ENCODE measurements at regions of chr7 and their contacts with region 1.

Region 1: DNA sequence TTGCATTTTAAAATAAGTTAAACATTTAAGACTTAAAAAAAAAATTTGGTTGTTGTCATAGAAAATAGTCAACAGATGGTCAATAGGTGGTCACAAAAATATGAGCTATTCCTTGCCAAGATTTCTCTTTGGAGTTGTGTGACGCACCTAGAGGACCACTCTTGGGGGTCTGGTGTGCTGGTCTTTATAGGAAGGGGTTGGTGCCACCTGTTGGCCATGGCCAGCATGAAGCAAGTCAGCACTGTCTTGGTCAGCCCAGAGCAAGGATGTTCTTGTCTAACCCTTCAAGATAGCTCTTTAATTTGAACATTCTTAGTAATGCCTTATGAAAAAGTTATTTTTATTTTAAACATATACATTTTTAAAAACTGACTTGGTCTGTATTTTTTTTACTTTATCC is 267.9 kb upstream of the CNTNAP2 start:
- DNase-seq: peak in 1 of 2 experiments; percentile 61
- H3K4me3 ChIP-seq: no peak overlapping the region
- H3K27ac ChIP-seq: no peak overlapping the region
- H3K4me1 ChIP-seq: no peaks in the 10 kb centered on the region
- H3K27me3 ChIP-seq: no peaks in the 10 kb centered on the region
- CTCF ChIP-seq: peak; percentile 73 to 86 (median 84)
- EP300 ChIP-seq: no peak
- POLR2A ChIP-seq: no peak
- RAD21 ChIP-seq: peak; percentile 86 to 90

Region 2: DNA sequence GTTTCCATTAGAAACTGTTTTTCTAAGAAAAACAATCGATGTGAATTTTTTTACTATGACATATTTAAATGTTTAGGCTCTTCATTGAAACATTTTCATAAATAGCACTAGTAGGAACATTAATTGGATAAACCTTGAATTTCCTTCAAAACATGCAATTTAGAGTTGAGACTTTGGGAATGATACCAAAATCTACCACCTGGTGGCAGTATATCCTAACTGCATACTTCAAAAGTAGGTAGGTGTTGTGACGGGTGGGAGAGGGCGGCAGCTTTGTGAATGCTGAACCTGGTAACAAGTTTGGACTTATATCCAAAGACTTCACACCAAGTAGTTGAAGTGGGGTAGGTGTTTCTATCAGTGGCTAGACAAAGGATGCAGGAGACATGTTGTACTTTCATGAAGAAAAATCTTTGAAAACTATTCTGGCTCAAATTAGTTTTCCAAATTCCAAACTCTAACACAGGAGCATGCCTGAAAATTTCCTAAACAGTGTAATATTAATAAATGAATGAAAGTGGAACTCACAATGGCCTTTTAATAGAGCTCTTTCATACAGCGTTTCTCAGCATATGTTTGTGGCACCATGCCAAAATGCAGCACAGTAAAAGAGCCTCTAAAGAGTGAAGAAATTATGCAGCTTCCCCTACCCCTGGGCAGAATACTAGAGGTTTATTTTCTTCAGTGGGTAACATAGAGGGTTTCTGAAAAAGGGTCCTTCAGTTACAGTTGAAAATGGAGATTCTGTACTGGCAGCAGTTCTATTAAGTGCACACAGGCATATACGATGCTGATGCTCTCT is 811.9 kb before region 1 on chr7:
- CTCF ChIA-PET with region 1: interaction called, 12 read pairs
- POLR2A ChIA-PET with region 1: no interaction called
- DNase-seq: peak in 1 of 2 experiments; percentile 21
- H3K4me3 ChIP-seq: no peak overlapping the region
- H3K27ac ChIP-seq: no peak overlapping the region
- H3K4me1 ChIP-seq: no peaks in the 10 kb centered on the region
- H3K27me3 ChIP-seq: no peaks in the 10 kb centered on the region
- CTCF ChIP-seq: peak in 2 of 3 experiments; percentile 64 to 77; a peak in 3 of 4 replicates
- EP300 ChIP-seq: no peak
- POLR2A ChIP-seq: no peak
- RAD21 ChIP-seq: peak; percentile 92 to 93

Region 3: GRCh38 chr7:145831616-145832206 is 17.0 kb before region 1 on chr7:
- CTCF ChIA-PET with region 1: interaction called, 11 read pairs
- POLR2A ChIA-PET with region 1: no interaction called
- DNase-seq: no peak
- H3K4me3 ChIP-seq: no peak overlapping the region
- H3K27ac ChIP-seq: no peak overlapping the region
- H3K4me1 ChIP-seq: no peaks in the 10 kb centered on the region
- H3K27me3 ChIP-seq: no peaks in the 10 kb centered on the region
- CTCF ChIP-seq: no peak
- EP300 ChIP-seq: no peak
- POLR2A ChIP-seq: no peak
- RAD21 ChIP-seq: no peak

Region 4: GRCh38 chr7:145860809-145861208 is 12.1 kb after region 1 on chr7:
- CTCF ChIA-PET with region 1: interaction called, 11 read pairs
- POLR2A ChIA-PET with region 1: no interaction called
- DNase-seq: no peak
- H3K4me3 ChIP-seq: no peak overlapping the region
- H3K27ac ChIP-seq: no peak overlapping the region
- H3K4me1 ChIP-seq: no peaks in the 10 kb centered on the region; a peak in 2 of 7 replicates
- H3K27me3 ChIP-seq: no peaks in the 10 kb centered on the region
- CTCF ChIP-seq: no peak
- EP300 ChIP-seq: no peak
- POLR2A ChIP-seq: no peak
- RAD21 ChIP-seq: no peak

Region 5: GRCh38 chr7:145868935-145869334 is 20.2 kb after region 1 on chr7:
- CTCF ChIA-PET with region 1: interaction called, 10 read pairs
- POLR2A ChIA-PET with region 1: no interaction called
- DNase-seq: no peak
- H3K4me3 ChIP-seq: no peak overlapping the region
- H3K27ac ChIP-seq: no peak overlapping the region
- H3K4me1 ChIP-seq: no peaks in the 10 kb centered on the region
- H3K27me3 ChIP-seq: no peaks in the 10 kb centered on the region
- CTCF ChIP-seq: no peak
- EP300 ChIP-seq: no peak
- POLR2A ChIP-seq: no peak
- RAD21 ChIP-seq: no peak

Measured in H1 (cell line).